K562 (cell line): ENCODE measurements at regions of chr16 and their contacts with region 1.

Region 1: DNA sequence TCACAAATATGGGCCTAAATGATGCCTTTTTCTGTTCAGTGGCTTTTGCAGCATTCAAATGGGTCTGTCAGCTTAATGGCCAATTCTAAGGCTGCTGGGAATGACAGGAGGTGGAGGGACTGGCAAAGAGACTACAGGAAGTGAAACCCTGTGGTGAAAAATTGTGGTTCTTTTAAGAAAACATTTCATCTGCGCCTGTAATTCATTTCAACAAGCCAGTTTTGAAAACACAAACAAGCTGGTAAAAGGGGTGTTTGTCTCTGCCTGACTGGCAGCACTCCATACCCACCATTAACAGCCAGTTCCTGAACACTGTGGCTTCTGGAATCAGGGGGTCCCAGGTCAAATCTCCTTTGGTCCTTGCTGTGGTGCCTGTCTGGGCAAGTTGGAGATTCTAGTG is 3.6 kb upstream of the KDM8 start:
- DNase-seq: no peak
- ATAC-seq: no peak
- H3K4me3 ChIP-seq: no peak overlapping the region
- H3K27ac ChIP-seq: peak overlapping the region; percentile 90; the same call in 1 of the 3 replicates
- H3K4me1 ChIP-seq: peaks cover 13 to 28% of the 10 kb centered on the region in 2 experiments
- H3K27me3 ChIP-seq: no peaks in the 10 kb centered on the region
- CTCF ChIP-seq: no peak
- EP300 ChIP-seq: no peak
- POLR2A ChIP-seq: no peak
- RAD21 ChIP-seq: no peak

Region 2: GRCh38 chr16:27185776-27186130 is 14.0 kb before region 1 on chr16:
- CTCF ChIA-PET with region 1: no interaction called
- POLR2A ChIA-PET with region 1: interaction called, 17 read pairs
- in situ Hi-C with region 1: no loop called
- intact Hi-C with region 1: no loop called
- DNase-seq: no peak
- ATAC-seq: no peak
- H3K4me3 ChIP-seq: no peak overlapping the region
- H3K27ac ChIP-seq: no peak overlapping the region
- H3K4me1 ChIP-seq: peaks cover 0 to 11% of the 10 kb centered on the region in 2 experiments; a peak in 3 of 5 replicates
- H3K27me3 ChIP-seq: peaks cover 7 to 20% of the 10 kb centered on the region in 2 experiments; a peak in 4 of 5 replicates
- CTCF ChIP-seq: no peak
- EP300 ChIP-seq: no peak
- POLR2A ChIP-seq: no peak
- RAD21 ChIP-seq: no peak